Activated CD4-positive, alpha-beta T cell treated with anti-CD3 and anti-CD28 coated beads for 36 hours (primary cell): ENCODE measurements at regions of chr17 and their contacts with region 1.

Region 1: DNA sequence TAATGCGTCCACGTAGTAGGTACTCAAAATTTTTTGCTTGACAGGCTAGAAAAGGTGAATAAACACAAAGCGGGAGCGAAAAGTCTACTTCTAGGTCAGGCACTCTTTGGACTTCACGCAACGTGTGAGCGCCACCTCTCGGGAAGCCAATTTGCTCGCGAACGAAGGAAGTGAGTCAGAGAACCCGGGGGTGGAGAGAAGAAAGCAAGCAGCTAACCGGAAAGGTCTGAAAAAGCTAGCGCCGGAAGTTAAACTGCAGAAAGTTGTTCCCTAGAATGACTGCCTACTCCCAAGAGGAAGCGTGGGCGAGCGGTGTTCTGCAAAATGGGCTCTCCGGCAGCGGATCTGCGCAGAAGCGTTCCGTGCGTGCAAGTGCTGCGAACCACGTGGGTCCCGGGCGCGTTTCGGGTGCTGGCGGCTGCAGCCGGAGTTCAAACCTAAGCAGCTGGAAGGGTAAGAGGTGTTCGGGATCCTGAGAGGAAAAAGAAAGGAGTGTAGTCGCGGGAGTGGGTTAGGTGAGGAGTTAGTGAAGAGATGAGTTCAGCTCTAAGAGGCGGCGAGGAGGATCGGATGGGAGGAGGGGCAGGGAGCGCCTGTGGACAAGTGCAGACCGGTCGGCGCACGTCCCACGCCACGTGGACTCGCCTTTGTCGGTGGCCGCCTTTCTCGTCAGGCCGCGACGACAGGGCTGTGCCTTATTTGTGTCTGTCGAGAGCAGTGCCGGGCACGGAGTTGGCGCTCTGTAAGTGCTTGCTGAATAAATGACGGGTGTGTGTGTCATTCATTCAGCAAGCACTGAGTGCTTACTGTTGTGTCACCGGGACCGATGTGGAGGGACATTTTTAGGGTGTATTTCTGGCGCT is at the start of gene NME1:
- DNase-seq: peak; percentile 98
- ATAC-seq: peak; percentile 93
- H3K4me3 Mint-ChIP-seq: no peak within 1 kb of the TSS
- H3K27ac Mint-ChIP-seq: no peak within 1 kb of the TSS
- H3K4me1 Mint-ChIP-seq: peaks cover 8% of the 10 kb centered on the region
- H3K27me3 Mint-ChIP-seq: no peaks in the 10 kb centered on the region
- total RNA-seq, gene NME1: 293 to 310 TPM

Region 2: GRCh38 chr17:50783193-50783660 is 370.2 kb before region 1 on chr17:
- CTCF ChIA-PET with region 1: interaction called, 3 read pairs
- POLR2A ChIA-PET with region 1: no interaction called
- intact Hi-C with region 1: loop called in 1 of 2 experiments (anchors 5 kb)
- DNase-seq: peak; percentile 90
- ATAC-seq: peak; percentile 89
- H3K4me3 Mint-ChIP-seq: no peak overlapping the region
- H3K27ac Mint-ChIP-seq: no peak overlapping the region
- H3K4me1 Mint-ChIP-seq: peaks cover 22% of the 10 kb centered on the region
- H3K27me3 Mint-ChIP-seq: peaks cover 11% of the 10 kb centered on the region

Region 3: DNA sequence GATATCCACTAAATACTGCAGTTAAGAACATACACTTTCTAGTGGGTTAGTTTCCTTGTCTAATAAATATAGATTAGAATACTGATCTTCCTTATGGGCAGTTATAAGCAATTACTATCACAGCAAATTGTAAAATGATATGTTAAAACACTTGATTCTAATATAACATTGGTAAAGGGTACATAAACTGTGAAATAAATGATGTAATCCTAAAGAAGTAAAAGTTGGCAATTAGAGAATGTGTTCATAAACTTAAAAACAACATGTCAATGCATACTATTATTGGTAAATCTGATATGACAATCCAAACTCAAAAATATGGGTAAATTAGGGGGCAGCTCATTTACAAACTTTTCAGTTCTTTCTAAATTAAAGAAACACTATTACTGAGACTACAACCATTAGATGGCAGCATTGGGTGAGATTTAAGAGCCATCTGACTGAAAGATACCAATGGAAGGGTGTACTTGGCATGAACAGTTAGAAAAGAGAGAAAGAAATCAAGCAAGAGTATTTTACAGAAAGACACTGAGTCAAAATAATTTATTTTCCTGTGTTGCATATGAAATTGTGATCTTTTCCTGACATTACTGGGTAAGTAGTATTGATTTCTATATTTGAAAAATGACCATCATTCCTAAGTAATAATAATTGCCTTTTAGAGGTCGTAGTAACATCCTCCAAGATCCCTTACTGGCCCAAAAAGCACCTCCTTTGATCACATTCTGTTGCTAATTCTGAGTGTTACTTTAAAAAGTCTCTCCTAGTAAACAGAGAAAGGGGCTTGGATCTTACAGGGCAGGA is 152.4 kb before region 1 on chr17:
- CTCF ChIA-PET with region 1: interaction called, 47 read pairs
- POLR2A ChIA-PET with region 1: interaction called, 4 read pairs
- intact Hi-C with region 1: loop called (anchors 1 kb)
- DNase-seq: no peak
- ATAC-seq: peak; percentile 85
- H3K4me3 Mint-ChIP-seq: no peak overlapping the region
- H3K27ac Mint-ChIP-seq: no peak overlapping the region
- H3K4me1 Mint-ChIP-seq: peaks cover 6% of the 10 kb centered on the region
- H3K27me3 Mint-ChIP-seq: no peaks in the 10 kb centered on the region

Region 4: GRCh38 chr17:51132964-51133319 is 20.5 kb before region 1 on chr17:
- CTCF ChIA-PET with region 1: interaction called, 10 read pairs
- POLR2A ChIA-PET with region 1: no interaction called
- intact Hi-C with region 1: no loop called
- DNase-seq: no peak
- ATAC-seq: peak; percentile 19
- H3K4me3 Mint-ChIP-seq: no peak overlapping the region
- H3K27ac Mint-ChIP-seq: no peak overlapping the region
- H3K4me1 Mint-ChIP-seq: peaks cover 8% of the 10 kb centered on the region
- H3K27me3 Mint-ChIP-seq: peaks cover 1% of the 10 kb centered on the region

Region 5: GRCh38 chr17:51260125-51260880 is 106.9 kb after region 1 on chr17 and contains the start of gene UTP18:
- CTCF ChIA-PET with region 1: no interaction called
- POLR2A ChIA-PET with region 1: no interaction called
- intact Hi-C with region 1: loop called (anchors 1 kb)
- DNase-seq: peak; percentile 98
- ATAC-seq: peak; percentile 84
- H3K4me3 Mint-ChIP-seq: peak within 1 kb of the TSS; percentile 84
- H3K27ac Mint-ChIP-seq: peak within 1 kb of the TSS; percentile 97
- H3K4me1 Mint-ChIP-seq: peaks cover 61% of the 10 kb centered on the region
- H3K27me3 Mint-ChIP-seq: no peaks in the 10 kb centered on the region
- total RNA-seq, gene UTP18: 49.3 to 74.0 TPM

Region 6: GRCh38 chr17:51298508-51299371 is 145.3 kb after region 1 on chr17:
- CTCF ChIA-PET with region 1: no interaction called
- POLR2A ChIA-PET with region 1: no interaction called
- intact Hi-C with region 1: no loop called
- DNase-seq: no peak
- ATAC-seq: peak; percentile 39
- H3K4me3 Mint-ChIP-seq: no peak overlapping the region
- H3K27ac Mint-ChIP-seq: no peak overlapping the region
- H3K4me1 Mint-ChIP-seq: peaks cover 2% of the 10 kb centered on the region
- H3K27me3 Mint-ChIP-seq: no peaks in the 10 kb centered on the region

Region 7: GRCh38 chr17:51427856-51428255 is 274.4 kb after region 1 on chr17:
- CTCF ChIA-PET with region 1: no interaction called
- POLR2A ChIA-PET with region 1: no interaction called
- intact Hi-C with region 1: no loop called
- DNase-seq: peak; percentile 83
- ATAC-seq: peak; percentile 92
- H3K4me3 Mint-ChIP-seq: peak overlapping the region; percentile 45
- H3K27ac Mint-ChIP-seq: peak overlapping the region; percentile 90
- H3K4me1 Mint-ChIP-seq: peaks cover 51% of the 10 kb centered on the region
- H3K27me3 Mint-ChIP-seq: no peaks in the 10 kb centered on the region